Gastrocnemius medialis (tissue), 4 donors: ENCODE measurements at regions of chr16 and their contacts with region 1.

Region 1: GRCh38 chr16:11759997-11760396 is 17.3 kb upstream of the TXNDC11 start:
- DNase-seq: no peak
- ATAC-seq: no peak
- H3K4me3 ChIP-seq: no peak overlapping the region
- H3K27ac ChIP-seq: no peak overlapping the region
- H3K4me1 ChIP-seq: no peaks in the 10 kb centered on the region
- H3K27me3 ChIP-seq: no peaks in the 10 kb centered on the region
- CTCF ChIP-seq: no peak
- POLR2A ChIP-seq: no peak

Region 2: DNA sequence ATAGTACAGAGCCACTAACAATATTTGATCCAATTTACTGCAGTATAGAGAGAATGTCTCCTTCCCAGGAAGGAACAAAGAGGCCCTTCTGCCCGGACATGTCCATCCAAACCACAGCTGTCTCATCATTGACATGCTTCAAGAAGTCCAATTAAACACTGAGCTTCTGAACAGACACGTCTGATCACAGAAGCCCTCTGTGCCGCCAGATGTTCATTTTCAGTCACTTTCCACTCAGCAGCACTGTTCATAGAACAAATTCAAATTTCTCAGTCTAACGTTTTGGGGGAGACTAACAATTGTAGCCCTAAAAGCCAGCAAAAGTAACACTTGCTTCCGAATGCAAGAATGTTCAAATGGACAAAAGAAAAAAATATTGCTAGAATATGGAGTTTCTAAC is 21.8 kb after region 1 on chr16:
- in situ Hi-C with region 1: no loop called
- intact Hi-C with region 1: loop called (anchors 2 kb)
- DNase-seq: no peak
- ATAC-seq: no peak
- H3K4me3 ChIP-seq: no peak overlapping the region
- H3K27ac ChIP-seq: peak overlapping the region; percentile 73 to 83 (median 79)
- H3K4me1 ChIP-seq: peaks cover 30 to 33% of the 10 kb centered on the region in 2 donors
- H3K27me3 ChIP-seq: no peaks in the 10 kb centered on the region
- CTCF ChIP-seq: no peak
- POLR2A ChIP-seq: no peak